ENCODE measurements at regions of chr1 and their contacts with region 1.

Region 1: DNA sequence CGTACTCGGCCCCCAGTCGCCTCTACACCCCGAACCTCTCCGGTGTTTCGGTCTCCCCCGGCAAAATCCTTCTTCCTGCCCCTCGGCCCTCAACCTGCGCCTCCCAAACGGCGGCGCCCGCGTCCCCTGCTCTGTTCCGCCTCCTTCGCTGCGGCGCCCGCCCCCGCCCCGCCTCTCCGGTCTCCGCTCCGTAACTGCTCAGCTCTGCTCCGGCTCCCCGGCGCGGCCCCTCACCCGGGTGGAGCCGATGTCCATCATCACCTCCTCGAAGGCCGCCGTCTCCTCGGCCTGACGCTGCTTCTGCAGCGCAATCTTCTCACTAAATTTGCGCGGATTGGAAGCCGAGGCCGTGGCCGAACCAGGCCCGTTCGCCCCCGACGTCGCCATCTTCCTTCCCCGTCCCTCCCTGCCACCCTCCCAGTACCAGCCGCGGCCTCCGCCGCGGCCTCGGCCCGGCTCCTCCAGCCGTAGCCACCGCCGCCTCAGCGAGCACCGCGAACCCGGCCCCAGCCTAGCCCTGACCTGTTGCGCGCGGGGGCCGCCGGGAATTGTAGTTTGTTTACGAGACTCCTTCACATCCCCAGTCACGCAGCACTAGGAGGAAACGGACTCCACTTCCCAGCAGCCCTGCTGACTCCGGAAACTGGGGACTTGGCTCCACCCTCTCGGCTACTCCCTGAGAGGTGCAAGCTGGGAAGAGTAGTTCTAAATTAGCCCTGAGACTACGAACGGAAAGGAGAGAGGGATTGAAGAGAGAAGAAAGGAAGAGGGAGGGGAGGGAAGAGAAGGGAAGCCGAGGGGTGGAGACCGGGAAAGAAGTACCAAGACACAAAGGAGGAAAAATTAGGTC is at the start of gene CRTC2:
- DNase-seq: peak; percentile 99
- H3K4me3 Mint-ChIP-seq: peak within 1 kb of the TSS; percentile 86
- H3K27ac Mint-ChIP-seq: peak within 1 kb of the TSS; percentile 92
- H3K4me1 Mint-ChIP-seq: peaks cover 53% of the 10 kb centered on the region
- H3K27me3 Mint-ChIP-seq: no peaks in the 10 kb centered on the region
- total RNA-seq, gene CRTC2: 72.6 to 83.0 TPM

Region 2: DNA sequence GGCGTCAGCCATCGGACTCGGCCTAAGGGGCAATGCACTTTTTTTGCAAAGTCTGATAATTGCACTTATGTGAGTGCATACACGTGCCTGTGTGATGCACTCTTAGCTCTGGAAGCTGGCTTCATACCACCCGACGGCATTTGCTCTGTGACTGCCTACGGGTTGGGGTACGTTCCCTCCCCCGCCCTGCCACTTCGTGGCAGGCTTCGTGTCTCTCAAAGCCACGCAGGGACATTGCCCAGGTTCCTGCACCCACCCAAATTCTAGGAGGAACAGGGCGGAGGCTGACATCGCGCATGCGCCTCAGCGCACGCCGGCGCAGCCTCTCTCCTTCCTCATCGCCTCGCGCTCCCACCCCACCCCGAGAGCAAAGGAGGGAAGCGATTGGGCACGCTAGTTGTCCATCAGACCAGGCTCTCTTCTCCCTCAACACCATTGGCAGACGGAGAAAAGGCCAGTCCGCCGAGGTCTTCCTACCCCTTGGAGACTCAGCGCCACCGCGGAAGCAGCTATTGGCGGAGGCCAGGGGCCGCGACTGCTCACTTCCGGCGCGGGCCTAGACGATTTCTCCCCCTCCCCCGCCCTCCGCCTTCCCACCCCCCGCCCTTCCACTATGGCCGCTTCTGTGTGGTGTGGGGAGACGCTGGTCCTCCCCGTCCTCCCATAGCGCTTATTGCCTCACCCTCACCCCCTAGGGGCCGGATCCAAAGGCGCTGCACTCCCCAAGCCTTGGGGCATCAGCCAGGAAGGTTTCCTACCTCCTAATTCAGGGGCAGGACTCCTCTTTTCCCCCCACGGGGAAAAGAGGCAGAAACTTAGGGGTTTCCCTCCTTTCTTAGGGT is 230.7 kb before region 1 on chr1 and contains the start of gene INTS3:
- CTCF ChIA-PET with region 1: no interaction called
- intact Hi-C with region 1: loop called (anchors 5 kb)
- DNase-seq: peak; percentile 100
- H3K4me3 Mint-ChIP-seq: peak within 1 kb of the TSS; percentile 97
- H3K27ac Mint-ChIP-seq: peak within 1 kb of the TSS; percentile 95
- H3K4me1 Mint-ChIP-seq: peaks cover 39% of the 10 kb centered on the region
- H3K27me3 Mint-ChIP-seq: no peaks in the 10 kb centered on the region
- total RNA-seq, gene INTS3: 39.3 to 40.4 TPM

Region 3: GRCh38 chr1:153783233-153784190 is 174.8 kb before region 1 on chr1:
- CTCF ChIA-PET with region 1: no interaction called
- intact Hi-C with region 1: loop called (anchors 1 kb)
- DNase-seq: peak; percentile 93
- H3K4me3 Mint-ChIP-seq: peak overlapping the region; percentile 95
- H3K27ac Mint-ChIP-seq: peak overlapping the region; percentile 92
- H3K4me1 Mint-ChIP-seq: peaks cover 5% of the 10 kb centered on the region
- H3K27me3 Mint-ChIP-seq: no peaks in the 10 kb centered on the region

Region 4: DNA sequence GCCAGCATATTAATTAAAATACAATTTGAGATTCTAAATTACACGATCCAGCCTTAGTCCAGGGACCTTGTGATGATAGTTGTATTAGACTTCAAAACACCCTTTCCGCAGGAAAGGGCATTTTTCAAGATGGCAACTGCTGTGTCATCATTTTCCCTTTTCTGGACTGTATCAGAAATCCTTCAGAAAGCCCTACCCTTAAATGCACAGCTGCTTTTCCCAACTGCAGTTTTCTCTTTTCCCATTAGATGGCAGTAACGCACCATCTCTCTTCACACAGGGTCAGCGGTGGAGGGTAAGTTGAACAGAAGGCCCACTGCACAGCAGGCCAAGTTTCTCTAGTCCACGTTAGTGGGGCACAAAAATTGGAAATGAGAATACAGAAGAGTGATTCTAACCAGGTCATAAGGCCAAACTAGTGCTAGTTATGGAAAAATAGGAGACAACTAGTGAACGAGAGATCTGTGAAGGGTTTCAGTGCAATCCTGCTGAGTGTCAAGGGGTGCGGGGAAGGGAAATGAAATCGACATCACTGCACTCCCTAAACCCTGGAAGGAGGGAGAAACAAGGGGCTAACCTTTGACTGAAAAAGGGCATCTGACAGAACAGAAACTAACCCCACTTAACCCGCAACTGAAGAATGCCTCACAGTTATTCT is 521.6 kb after region 1 on chr1:
- CTCF ChIA-PET with region 1: no interaction called
- intact Hi-C with region 1: no loop called
- DNase-seq: peak; percentile 73
- H3K4me3 Mint-ChIP-seq: no peak overlapping the region
- H3K27ac Mint-ChIP-seq: no peak overlapping the region
- H3K4me1 Mint-ChIP-seq: peaks cover 28% of the 10 kb centered on the region
- H3K27me3 Mint-ChIP-seq: no peaks in the 10 kb centered on the region

Measured in activated naive CD4-positive, alpha-beta T cell treated with anti-CD3 and anti-CD28 coated beads for 36 hours (primary cell).